ENCODE measurements at regions of chr1 and their contacts with region 1.

Region 1: DNA sequence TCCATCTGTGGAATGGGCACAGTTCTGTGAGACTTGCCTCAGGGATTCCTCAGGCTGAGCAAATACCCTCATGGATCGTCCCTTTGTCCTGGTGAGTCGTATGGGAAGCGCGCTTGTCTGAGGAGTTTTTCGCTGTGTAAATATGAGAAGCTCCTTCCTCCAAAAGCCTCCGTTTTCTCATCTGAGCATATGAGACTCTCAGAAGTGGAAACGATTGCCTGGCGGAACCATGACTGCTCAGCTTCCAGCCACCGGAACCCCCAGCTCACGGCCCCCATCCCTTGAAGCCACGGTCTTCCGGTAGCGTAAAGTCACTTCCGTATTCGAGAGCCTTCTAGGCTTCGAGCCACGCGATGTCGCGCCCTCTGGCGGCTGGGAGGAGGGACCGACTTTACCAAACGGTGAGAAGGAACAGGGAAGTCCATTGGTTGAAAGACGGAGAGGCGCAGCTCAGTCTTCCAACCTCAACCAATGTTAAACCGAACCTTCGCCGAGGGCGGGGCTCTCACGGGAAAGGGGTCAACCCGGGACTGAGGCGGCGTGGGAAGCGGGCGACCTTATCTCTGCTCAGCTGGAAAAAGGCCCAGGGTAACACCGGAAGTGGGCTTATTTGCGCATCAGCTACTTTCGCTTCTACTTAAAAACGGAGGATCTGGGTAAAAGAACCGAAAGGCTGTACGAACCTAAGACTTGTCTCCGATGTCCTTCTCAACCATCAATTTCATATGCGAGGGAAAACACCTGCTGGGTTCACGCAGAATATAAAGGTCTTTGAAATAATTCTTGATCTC is 46.2 kb downstream of the AZIN2 start:
- DNase-seq: peak; percentile 99
- ATAC-seq: peak; percentile 97
- H3K4me3 ChIP-seq: peak overlapping the region; percentile 80 to 96 (median 88)
- H3K4me3 Mint-ChIP-seq: peak overlapping the region; percentile 93
- H3K27ac ChIP-seq: peak overlapping the region; percentile 82 to 83
- H3K27ac Mint-ChIP-seq: peak overlapping the region; percentile 95
- H3K4me1 ChIP-seq: peaks cover 13 to 25% of the 10 kb centered on the region in 2 donors
- H3K4me1 Mint-ChIP-seq: peaks cover 18% of the 10 kb centered on the region
- H3K27me3 ChIP-seq: no peaks in the 10 kb centered on the region
- H3K27me3 Mint-ChIP-seq: peaks cover 5% of the 10 kb centered on the region
- CTCF ChIP-seq: peak; percentile 86

Region 2: GRCh38 chr1:32981003-32981901 is 145.9 kb before region 1 on chr1:
- CTCF ChIA-PET with region 1: no interaction called
- POLR2A ChIA-PET with region 1: no interaction called
- intact Hi-C with region 1: loop called (anchors 1 kb)
- DNase-seq: peak; percentile 88
- ATAC-seq: peak; percentile 96
- H3K4me3 ChIP-seq: peak overlapping the region in 4 of 5 experiments; percentile 6 to 44 (median 38)
- H3K4me3 Mint-ChIP-seq: peak overlapping the region; percentile 74
- H3K27ac ChIP-seq: peak overlapping the region; percentile 70 to 87
- H3K27ac Mint-ChIP-seq: peak overlapping the region; percentile 84
- H3K4me1 ChIP-seq: peaks cover 34 to 44% of the 10 kb centered on the region in 2 donors
- H3K4me1 Mint-ChIP-seq: peaks cover 43% of the 10 kb centered on the region
- H3K27me3 ChIP-seq: no peaks in the 10 kb centered on the region
- H3K27me3 Mint-ChIP-seq: no peaks in the 10 kb centered on the region
- CTCF ChIP-seq: no peak

Region 3: GRCh38 chr1:33080885-33081553 is 46.2 kb before region 1 on chr1 and contains the start of gene AZIN2:
- CTCF ChIA-PET with region 1: interaction called, 9 read pairs
- POLR2A ChIA-PET with region 1: interaction called, 9 read pairs
- intact Hi-C with region 1: loop called (anchors 1 kb)
- DNase-seq: peak; percentile 94
- ATAC-seq: peak; percentile 99
- H3K4me3 ChIP-seq: peak within 1 kb of the TSS; percentile 50 to 73 (median 63)
- H3K4me3 Mint-ChIP-seq: peak within 1 kb of the TSS; percentile 85
- H3K27ac ChIP-seq: no peak within 1 kb of the TSS
- H3K27ac Mint-ChIP-seq: peak within 1 kb of the TSS; percentile 47
- H3K4me1 ChIP-seq: peaks cover 14 to 19% of the 10 kb centered on the region in 2 donors
- H3K4me1 Mint-ChIP-seq: peaks cover 21% of the 10 kb centered on the region
- H3K27me3 ChIP-seq: peaks cover 0 to 12% (median 4%) of the 10 kb centered on the region in 4 experiments
- H3K27me3 Mint-ChIP-seq: peaks cover 7% of the 10 kb centered on the region
- CTCF ChIP-seq: no peak
- total RNA-seq, gene AZIN2: 5.4 and 5.9 TPM in 2 replicates

Region 4: DNA sequence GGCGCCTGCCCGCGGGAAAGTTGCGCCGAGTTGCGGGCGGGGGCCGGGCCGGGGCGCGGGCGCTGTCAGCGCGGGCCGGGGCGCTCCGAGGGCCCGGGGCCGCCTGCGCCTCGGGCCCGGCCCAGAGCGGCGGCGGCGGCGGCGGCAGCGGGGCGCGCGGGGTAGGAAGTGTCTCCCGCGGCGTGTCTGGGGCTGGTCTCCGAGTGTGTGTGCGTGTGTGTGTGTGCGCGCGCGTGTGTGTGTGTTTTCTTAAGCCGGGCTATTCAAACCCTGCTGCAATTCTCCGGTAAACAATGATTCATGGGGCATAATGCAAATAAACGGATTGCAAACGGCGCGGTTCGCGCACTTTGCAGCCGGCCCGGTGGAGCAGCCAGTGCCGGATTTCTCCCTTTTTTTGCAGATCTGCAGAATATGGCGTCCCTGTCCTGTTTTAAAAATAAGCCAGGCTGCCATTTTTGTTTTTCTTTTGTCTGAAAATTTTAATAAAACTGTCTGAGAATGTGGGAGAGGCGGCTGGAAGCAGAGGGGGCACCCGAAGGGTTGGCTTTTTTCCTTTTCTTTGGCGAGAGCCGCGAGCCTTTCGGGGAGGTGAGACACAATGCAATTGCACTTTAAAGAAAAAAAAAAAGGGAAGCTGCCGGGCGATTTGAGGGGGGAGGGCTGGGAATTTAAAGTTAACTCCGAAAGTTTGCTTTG is 129.7 kb after region 1 on chr1:
- CTCF ChIA-PET with region 1: interaction called, 5 read pairs
- POLR2A ChIA-PET with region 1: no interaction called
- intact Hi-C with region 1: loop called (anchors 5 kb)
- DNase-seq: peak; percentile 72
- ATAC-seq: peak; percentile 62
- H3K4me3 ChIP-seq: peak overlapping the region; percentile 34 to 91 (median 79)
- H3K4me3 Mint-ChIP-seq: peak overlapping the region; percentile 98
- H3K27ac ChIP-seq: peak overlapping the region; percentile 19 to 42
- H3K27ac Mint-ChIP-seq: peak overlapping the region; percentile 97
- H3K4me1 ChIP-seq: peaks cover 20 to 25% of the 10 kb centered on the region in 2 donors
- H3K4me1 Mint-ChIP-seq: peaks cover 39% of the 10 kb centered on the region
- H3K27me3 ChIP-seq: no peaks in the 10 kb centered on the region
- H3K27me3 Mint-ChIP-seq: no peaks in the 10 kb centered on the region
- CTCF ChIP-seq: no peak